Activated CD4-positive, alpha-beta memory T cell treated with anti-CD3 and anti-CD28 coated beads, Interleukin-2, amount 10 ng/mL, durations not matched to agents 7 days and 5 days (primary cell): ENCODE measurements at regions of chr3 and their contacts with region 1.

Region 1: DNA sequence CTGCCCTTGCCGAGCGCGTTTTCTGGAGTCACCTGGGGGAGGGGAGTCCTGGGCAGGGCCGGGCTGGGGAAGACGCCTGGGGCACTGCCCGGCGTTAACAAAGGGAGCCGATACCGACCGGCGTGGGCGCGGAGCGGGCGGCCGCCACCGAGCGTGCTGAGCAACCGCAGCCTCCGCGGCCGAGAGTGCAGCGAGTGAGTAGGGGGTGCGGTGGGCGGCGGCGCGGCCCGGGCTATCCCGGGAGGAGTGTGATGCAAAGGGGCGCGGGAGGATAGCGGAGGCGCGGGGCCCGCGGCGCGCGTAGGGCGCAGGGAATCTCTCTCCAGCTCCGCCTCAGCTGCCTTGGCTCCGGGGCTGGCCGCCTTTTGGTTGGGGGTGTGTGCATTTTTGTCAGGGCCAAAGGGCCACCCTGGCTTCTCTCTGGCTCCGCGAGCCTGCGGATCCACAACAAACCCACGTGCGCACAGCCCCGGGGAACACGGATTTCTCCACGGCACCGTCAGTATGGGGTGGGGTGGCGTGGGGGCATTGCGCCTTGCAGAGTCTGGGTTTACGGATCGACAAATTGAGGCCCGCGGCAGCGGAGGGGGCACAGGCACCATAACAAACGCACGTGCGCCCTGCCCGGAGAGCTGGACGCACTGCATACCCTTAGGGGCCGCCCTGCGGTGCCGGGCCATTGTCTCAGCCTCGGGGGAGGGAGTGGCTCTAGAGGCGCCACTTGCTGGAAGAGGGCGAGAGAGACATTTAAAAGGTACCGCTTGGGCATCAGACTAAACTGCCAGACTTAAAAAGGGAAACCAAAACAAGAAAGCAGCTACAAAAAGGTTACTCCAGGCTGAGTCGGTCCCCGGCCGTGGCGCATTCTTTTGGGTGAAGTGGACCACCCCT is 560 bp downstream of the ST6GAL1 start:
- DNase-seq: peak; percentile 77
- H3K4me3 Mint-ChIP-seq: peak overlapping the region; percentile 84
- H3K27ac Mint-ChIP-seq: peak overlapping the region; percentile 88
- H3K4me1 Mint-ChIP-seq: peaks cover 39% of the 10 kb centered on the region
- H3K27me3 Mint-ChIP-seq: no peaks in the 10 kb centered on the region

Region 2: DNA sequence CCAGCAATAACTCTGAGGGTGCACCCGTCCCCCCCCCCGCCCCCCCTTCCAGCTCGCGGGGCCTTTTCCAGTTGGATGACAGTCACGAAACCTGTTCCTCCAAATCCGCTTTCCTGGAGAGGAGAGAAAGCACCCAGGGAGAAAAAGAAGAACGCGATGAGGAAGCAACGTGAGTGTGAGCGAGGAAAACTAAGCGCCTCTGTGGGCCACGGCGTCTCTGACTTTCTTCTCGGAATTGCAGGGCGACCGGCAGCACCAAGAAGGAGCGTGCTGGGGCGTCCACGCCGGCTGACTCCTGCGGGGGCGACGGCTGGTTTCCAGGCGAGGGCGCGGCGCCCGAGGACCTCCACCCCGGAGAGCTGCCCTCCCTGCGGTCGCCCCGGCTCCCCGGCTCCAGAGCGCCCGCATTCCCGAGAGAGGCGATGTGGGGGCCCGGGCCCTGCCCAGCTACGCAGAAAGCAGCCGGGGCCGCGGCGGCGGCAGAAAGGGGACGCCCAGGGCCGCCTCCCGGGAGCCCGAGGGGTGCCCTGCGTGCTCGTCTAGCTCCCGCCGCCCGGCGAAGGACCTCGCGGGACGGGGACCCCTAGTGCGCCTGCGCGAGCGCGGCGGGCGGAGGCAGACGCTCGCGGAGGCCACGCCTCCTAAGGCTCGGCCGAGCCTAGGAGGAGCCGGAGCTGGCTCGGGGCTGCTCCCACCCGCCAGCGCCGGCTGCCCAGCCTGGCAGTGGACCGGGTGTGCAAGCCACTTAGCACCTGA is 103.7 kb before region 1 on chr3:
- CTCF ChIA-PET with region 1: interaction called, 3 read pairs
- POLR2A ChIA-PET with region 1: interaction called, 30 read pairs
- DNase-seq: peak; percentile 89
- H3K4me3 Mint-ChIP-seq: peak overlapping the region; percentile 75
- H3K27ac Mint-ChIP-seq: peak overlapping the region; percentile 57
- H3K4me1 Mint-ChIP-seq: peaks cover 27% of the 10 kb centered on the region
- H3K27me3 Mint-ChIP-seq: peaks cover 39% of the 10 kb centered on the region

Region 3: GRCh38 chr3:186901135-186901734 is 29.7 kb before region 1 on chr3:
- CTCF ChIA-PET with region 1: interaction called, 3 read pairs
- POLR2A ChIA-PET with region 1: interaction called, 15 read pairs
- DNase-seq: peak; percentile 21
- H3K4me3 Mint-ChIP-seq: no peak overlapping the region
- H3K27ac Mint-ChIP-seq: peak overlapping the region; percentile 79
- H3K4me1 Mint-ChIP-seq: peaks cover 29% of the 10 kb centered on the region
- H3K27me3 Mint-ChIP-seq: no peaks in the 10 kb centered on the region

Region 4: GRCh38 chr3:186953011-186953487 is 22.2 kb after region 1 on chr3:
- CTCF ChIA-PET with region 1: interaction called, 9 read pairs
- POLR2A ChIA-PET with region 1: interaction called, 27 read pairs
- DNase-seq: peak; percentile 27
- H3K4me3 Mint-ChIP-seq: peak overlapping the region; percentile 48
- H3K27ac Mint-ChIP-seq: peak overlapping the region; percentile 96
- H3K4me1 Mint-ChIP-seq: peaks cover 78% of the 10 kb centered on the region
- H3K27me3 Mint-ChIP-seq: no peaks in the 10 kb centered on the region

Region 5: DNA sequence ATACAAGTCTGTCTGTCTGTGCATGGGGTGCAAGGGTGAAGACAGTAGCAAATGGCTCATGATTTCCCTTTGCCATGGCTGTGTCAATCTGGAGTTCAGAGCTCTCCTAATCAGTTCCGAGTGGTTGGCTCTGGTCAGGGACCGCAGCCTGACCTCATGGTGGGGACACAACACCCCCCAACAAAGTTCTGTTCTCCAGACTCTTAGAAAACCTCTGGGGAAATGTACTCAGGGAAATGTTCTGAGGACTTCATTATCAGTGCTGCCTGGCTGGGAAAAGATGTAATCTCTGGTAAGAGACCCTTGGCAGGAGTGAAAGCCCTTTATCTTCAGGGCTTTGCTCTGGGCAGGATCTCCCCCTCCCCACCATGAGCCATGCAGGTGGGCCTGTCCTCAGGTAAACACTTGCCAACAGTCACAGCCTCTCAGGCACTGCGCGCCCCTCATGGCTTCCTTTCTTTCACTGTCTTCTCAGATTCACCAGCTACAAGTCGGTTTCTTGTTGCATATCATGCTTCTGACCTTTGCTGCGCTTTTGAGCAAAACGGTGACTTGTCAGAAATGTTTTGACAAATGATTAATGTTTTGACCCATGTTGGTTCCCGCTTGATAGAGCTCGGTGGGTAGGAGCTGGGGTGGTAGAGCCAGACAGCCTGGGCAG is 94.9 kb after region 1 on chr3:
- CTCF ChIA-PET with region 1: interaction called, 15 read pairs
- POLR2A ChIA-PET with region 1: interaction called, 62 read pairs
- DNase-seq: peak; percentile 47
- H3K4me3 Mint-ChIP-seq: peak overlapping the region; percentile 73
- H3K27ac Mint-ChIP-seq: peak overlapping the region; percentile 88
- H3K4me1 Mint-ChIP-seq: peaks cover 72% of the 10 kb centered on the region
- H3K27me3 Mint-ChIP-seq: no peaks in the 10 kb centered on the region

Region 6: GRCh38 chr3:187112934-187113793 is 182.3 kb after region 1 on chr3:
- CTCF ChIA-PET with region 1: interaction called, 10 read pairs
- POLR2A ChIA-PET with region 1: no interaction called
- DNase-seq: no peak
- H3K4me3 Mint-ChIP-seq: no peak overlapping the region
- H3K27ac Mint-ChIP-seq: no peak overlapping the region
- H3K4me1 Mint-ChIP-seq: peaks cover 7% of the 10 kb centered on the region
- H3K27me3 Mint-ChIP-seq: no peaks in the 10 kb centered on the region